Caco-2 (cell line): ENCODE measurements at regions of chr14 and their contacts with region 1.

Region 1: GRCh38 chr14:69980457-69981425 is 101.5 kb downstream of the SMOC1 start:
- DNase-seq: peak; percentile 47 to 77
- H3K4me3 ChIP-seq: no peak overlapping the region
- H3K4me3 Mint-ChIP-seq: no peak overlapping the region
- H3K27ac Mint-ChIP-seq: peak overlapping the region; percentile 19
- H3K4me1 ChIP-seq: peaks cover 30% of the 10 kb centered on the region
- H3K4me1 Mint-ChIP-seq: peaks cover 16% of the 10 kb centered on the region
- H3K27me3 ChIP-seq: no peaks in the 10 kb centered on the region
- H3K27me3 Mint-ChIP-seq: no peaks in the 10 kb centered on the region
- CTCF ChIP-seq: no peak

Region 2: DNA sequence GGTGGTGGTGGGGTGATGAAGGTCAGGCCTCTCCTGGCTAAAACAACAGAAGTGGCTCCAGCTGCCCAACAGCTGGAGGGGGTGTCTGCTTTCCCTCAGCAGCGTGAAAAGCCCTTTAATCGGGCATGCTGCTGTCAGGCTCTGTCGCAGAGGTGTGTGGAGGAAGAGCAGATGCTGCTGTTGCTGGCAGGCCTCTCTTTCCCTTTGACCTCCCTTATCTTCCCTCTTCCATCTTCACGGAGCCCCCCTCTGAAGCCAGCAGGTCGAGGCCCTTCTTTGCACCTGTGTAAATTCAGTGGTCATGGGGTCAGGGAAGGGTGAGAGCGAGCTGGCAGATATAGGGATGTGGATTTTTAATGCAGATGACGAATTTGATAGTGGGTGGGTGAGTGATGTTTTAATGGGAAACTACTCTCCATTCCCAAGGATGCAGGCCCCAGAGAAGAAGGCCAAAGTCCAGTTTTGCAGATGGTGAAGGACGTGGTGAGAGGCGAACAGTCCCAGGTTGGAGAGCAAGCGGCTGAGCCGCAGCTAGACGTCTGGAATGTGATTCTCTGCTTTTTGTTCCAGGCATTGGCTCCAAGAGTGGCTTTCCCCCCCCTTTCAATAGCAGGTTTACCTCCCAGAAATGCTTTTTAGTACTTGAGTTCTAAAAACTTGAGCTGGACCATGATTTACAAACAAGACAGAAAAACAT is 37.5 kb before region 1 on chr14:
- CTCF ChIA-PET with region 1: no interaction called
- POLR2A ChIA-PET with region 1: no interaction called
- intact Hi-C with region 1: loop called (anchors 5 kb)
- DNase-seq: peak; percentile 51 to 85
- H3K4me3 ChIP-seq: no peak overlapping the region
- H3K4me3 Mint-ChIP-seq: no peak overlapping the region
- H3K27ac Mint-ChIP-seq: peak overlapping the region; percentile 50
- H3K4me1 ChIP-seq: peaks cover 37% of the 10 kb centered on the region
- H3K4me1 Mint-ChIP-seq: peaks cover 27% of the 10 kb centered on the region
- H3K27me3 ChIP-seq: no peaks in the 10 kb centered on the region
- H3K27me3 Mint-ChIP-seq: no peaks in the 10 kb centered on the region
- CTCF ChIP-seq: no peak